ENCODE measurements at regions of chr10 and their contacts with region 1.

Region 1: GRCh38 chr10:71608819-71609768 is 110.5 kb downstream of the C10orf105 start:
- DNase-seq: peak; percentile 54
- H3K4me3 ChIP-seq: no peak overlapping the region
- H3K27ac ChIP-seq: no peak overlapping the region
- H3K4me1 ChIP-seq: no peaks in the 10 kb centered on the region
- H3K27me3 ChIP-seq: peaks cover 3 to 4% of the 10 kb centered on the region in 2 experiments
- CTCF ChIP-seq: peak; percentile 74 to 89
- POLR2A ChIP-seq: no peak

Region 2: DNA sequence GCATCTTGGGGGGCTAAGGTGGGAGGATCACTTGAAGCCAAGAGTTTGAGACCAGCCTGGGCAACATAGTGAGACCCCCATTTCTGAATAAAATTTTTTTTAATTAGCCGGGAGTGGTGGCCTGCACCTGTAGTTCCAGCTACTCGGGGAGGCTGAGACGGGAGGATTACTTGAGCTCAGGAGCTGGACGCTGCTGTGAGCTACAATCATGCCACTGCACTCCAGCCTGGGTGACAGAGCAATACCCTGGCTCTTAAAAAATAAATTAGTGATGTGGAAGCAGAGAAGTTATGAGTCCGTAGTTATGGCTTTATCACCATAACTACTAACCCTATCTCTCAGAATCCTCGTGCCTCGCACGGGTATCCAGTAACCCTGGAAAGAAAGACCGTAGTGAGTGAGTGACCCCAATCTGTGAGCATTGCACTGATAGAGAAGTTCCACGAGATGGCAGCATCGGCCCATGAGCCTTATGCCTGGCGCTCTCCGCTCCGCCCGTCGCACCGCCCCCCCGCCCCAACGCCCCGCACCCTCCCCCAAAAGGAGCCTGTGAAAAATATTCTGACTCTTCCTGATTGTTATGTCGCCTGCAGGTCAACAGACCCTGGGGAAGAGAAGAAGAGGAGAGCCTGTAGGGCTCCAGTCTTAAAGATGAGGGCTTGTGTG is 294.9 kb before region 1 on chr10:
- CTCF ChIA-PET with region 1: interaction called, 11 read pairs
- POLR2A ChIA-PET with region 1: no interaction called
- dilution Hi-C with region 1: no loop called
- intact Hi-C with region 1: loop called (anchors 2 kb)
- DNase-seq: peak; percentile 28
- H3K4me3 ChIP-seq: no peak overlapping the region
- H3K27ac ChIP-seq: no peak overlapping the region
- H3K4me1 ChIP-seq: no peaks in the 10 kb centered on the region
- H3K27me3 ChIP-seq: peaks cover 16 to 20% of the 10 kb centered on the region in 2 experiments
- CTCF ChIP-seq: peak; percentile 40 to 81
- POLR2A ChIP-seq: no peak

Region 3: DNA sequence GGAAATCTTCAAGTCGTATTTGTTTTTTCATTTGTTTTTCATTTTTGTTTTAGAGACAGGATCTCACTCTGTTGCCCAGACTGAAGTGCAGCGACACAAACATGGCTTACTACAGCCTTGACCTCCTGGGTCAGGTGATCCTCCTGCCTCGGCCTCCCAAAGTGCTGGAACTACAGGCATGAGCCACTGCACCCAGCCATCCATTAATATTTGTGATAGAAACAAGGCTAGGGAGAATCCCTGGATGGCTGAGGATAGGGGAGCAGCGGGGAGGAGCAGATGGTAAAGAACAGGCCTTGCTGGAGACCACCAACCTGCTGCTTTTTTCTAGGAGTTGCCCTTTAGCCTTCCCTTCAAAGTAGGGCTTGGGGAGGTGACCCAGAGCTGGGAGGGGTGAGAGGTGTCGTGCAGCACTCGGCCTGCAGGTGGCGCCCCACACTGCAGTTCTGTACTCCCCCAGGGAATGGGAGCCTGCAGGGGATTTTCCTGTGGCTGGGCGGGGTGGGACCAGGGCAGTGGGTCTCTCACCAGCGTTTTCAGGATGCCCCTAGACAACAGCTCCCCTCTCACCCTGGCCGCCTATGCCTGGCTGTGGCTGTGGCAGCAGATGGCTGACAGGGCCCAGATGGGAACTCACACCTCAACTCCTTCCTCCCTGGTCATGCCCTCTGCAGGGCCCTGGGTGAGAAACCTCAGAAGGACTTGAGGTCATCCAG is 225.0 kb before region 1 on chr10:
- CTCF ChIA-PET with region 1: interaction called, 25 read pairs
- POLR2A ChIA-PET with region 1: no interaction called
- dilution Hi-C with region 1: no loop called
- intact Hi-C with region 1: loop called (anchors 1 kb)
- DNase-seq: peak; percentile 42
- H3K4me3 ChIP-seq: no peak overlapping the region
- H3K27ac ChIP-seq: no peak overlapping the region
- H3K4me1 ChIP-seq: no peaks in the 10 kb centered on the region
- H3K27me3 ChIP-seq: peaks cover 6 to 8% of the 10 kb centered on the region in 2 experiments
- CTCF ChIP-seq: peak; percentile 91 to 98
- POLR2A ChIP-seq: no peak

Region 4: GRCh38 chr10:71486484-71487114 is 122.5 kb before region 1 on chr10:
- CTCF ChIA-PET with region 1: interaction called, 5 read pairs
- POLR2A ChIA-PET with region 1: no interaction called
- dilution Hi-C with region 1: no loop called
- intact Hi-C with region 1: loop called (anchors 1 kb)
- DNase-seq: peak; percentile 15
- H3K4me3 ChIP-seq: no peak overlapping the region
- H3K27ac ChIP-seq: no peak overlapping the region
- H3K4me1 ChIP-seq: no peaks in the 10 kb centered on the region
- H3K27me3 ChIP-seq: no peaks in the 10 kb centered on the region
- CTCF ChIP-seq: peak; percentile 66 to 80
- POLR2A ChIP-seq: no peak

Region 5: DNA sequence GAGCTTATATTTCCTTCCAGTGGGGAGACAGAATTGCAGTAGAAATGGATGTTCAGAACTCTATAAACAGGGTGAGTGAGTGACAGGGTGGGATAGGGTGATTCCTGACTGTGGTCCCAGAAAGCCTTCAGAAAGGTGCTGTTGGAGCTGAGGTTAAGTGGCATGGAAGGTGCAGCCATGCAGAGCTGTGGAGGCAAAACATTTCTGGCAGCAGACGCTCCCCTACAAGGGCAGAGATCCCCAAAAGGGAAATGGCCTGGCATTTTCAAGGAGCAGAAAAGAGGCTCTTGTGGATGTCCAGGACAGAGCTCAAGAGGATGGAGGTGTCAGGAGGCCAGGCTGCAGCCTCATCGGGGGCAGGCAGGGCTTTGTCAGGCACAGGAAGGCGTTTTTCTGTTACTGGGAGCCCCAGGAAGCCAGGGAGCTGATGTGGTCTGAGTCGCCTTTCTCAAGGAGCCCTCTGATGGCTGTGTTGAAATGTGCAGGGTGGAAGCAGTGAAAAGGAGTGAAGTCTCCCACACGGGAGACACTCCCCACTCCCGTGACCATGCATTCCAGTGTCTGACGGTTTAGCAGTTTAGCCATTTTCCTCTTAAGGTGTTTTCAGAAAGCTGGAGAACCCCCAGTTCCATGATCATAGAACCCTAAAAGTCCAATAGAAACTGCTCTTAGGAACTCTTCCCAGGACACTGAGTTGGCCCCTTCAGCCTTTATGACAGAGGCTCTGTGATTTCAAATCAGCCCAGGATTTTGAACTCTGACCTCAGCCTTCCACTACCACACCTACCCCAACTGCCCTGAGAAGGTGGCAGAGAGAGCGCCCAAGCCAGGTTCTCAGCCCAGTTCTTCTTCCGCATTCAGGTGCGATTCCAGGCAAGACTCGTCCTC is 14.2 kb after region 1 on chr10:
- CTCF ChIA-PET with region 1: interaction called, 10 read pairs
- POLR2A ChIA-PET with region 1: interaction called, 7 read pairs
- dilution Hi-C with region 1: no loop called
- intact Hi-C with region 1: no loop called
- DNase-seq: peak; percentile 21
- H3K4me3 ChIP-seq: no peak overlapping the region
- H3K27ac ChIP-seq: no peak overlapping the region
- H3K4me1 ChIP-seq: peaks cover 6% of the 10 kb centered on the region
- H3K27me3 ChIP-seq: no peaks in the 10 kb centered on the region
- CTCF ChIP-seq: peak in 1 of 2 donors; percentile 3
- POLR2A ChIP-seq: no peak

Region 6: DNA sequence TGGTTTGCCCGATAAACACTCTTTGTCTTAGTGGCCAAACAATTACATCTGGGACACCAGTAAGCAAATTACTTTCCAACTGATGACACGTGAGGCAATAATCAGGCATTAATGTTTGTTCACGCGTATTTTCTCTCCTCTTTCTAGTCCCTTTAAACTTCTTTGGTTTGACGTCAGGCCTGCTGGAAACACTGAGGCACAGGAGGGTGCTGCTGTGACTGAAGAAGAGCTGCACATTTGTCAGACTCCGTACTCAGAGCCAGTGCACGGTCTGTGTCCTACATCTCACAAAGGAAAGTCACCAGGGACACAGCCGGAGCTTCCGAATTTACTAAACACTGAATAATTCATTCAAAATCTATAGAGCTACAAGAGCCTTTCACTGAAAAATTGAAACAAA is 549.1 kb after region 1 on chr10:
- CTCF ChIA-PET with region 1: no interaction called
- POLR2A ChIA-PET with region 1: no interaction called
- dilution Hi-C with region 1: no loop called
- intact Hi-C with region 1: no loop called
- DNase-seq: no peak
- H3K4me3 ChIP-seq: no peak overlapping the region
- H3K27ac ChIP-seq: no peak overlapping the region
- H3K4me1 ChIP-seq: no peaks in the 10 kb centered on the region
- H3K27me3 ChIP-seq: no peaks in the 10 kb centered on the region
- CTCF ChIP-seq: no peak
- POLR2A ChIP-seq: no peak

Measured in endothelial cell of umbilical vein (primary cell).